Tibial artery (tissue), 4 donors: ENCODE measurements at regions of chr1 and their contacts with region 1.

Region 1: DNA sequence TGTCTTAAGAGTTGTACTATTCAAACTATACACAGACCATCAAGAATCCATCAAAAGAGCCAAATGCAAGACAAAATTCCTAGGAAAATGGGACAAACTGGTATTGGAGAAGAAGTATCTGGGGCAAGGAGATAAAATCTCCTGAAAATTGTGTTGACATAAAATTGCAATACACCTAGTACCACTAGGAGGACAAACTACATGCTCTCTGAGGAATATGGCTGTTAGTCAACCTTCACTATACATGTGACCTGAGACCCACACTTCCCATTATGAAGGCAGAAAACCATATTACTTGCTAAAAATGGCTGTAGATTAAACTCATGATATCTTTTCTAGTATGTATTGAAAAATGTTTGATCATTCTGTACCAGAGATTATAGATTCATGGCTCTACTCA is 30.0 kb downstream of the IRF2BP2 start:
- DNase-seq: no peak
- H3K4me3 ChIP-seq: no peak overlapping the region
- H3K27ac ChIP-seq: no peak overlapping the region
- H3K4me1 ChIP-seq: peaks cover 6 to 39% (median 30%) of the 10 kb centered on the region in 4 donors
- H3K27me3 ChIP-seq: no peaks in the 10 kb centered on the region
- CTCF ChIP-seq: peak; percentile 14 to 17

Region 2: GRCh38 chr1:234545859-234546561 is 34.0 kb before region 1 on chr1:
- intact Hi-C with region 1: loop called (anchors 5 kb)
- DNase-seq: no peak
- H3K4me3 ChIP-seq: no peak overlapping the region
- H3K27ac ChIP-seq: no peak overlapping the region
- H3K4me1 ChIP-seq: peaks cover 4 to 27% (median 20%) of the 10 kb centered on the region in 4 donors
- H3K27me3 ChIP-seq: no peaks in the 10 kb centered on the region
- CTCF ChIP-seq: no peak